ENCODE measurements at regions of chr11 and their contacts with region 1.

Region 1: DNA sequence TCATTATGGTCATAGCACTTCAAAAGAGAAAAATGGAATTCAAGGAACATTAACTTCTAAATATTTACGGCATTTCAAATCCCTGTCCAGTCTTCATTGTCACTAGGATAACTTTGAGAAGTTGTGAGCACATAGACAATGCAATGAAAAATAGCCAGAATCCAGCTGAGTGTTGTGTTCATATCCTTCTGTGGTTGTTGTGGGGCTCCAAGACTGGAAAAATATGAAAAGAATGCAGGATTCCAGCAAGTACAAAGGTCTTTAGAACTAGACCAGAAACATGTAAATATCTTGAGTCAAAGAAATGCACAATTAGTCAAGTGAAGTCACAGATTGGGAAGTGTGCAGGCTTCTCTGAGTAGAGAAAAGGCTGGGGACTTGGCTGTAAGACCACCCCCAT is 68.7 kb downstream of the WT1 start:
- DNase-seq: peak in 1 of 2 experiments; percentile 38
- H3K4me3 ChIP-seq: no peak overlapping the region
- H3K4me3 Mint-ChIP-seq: peak overlapping the region; percentile 40
- H3K27ac Mint-ChIP-seq: peak overlapping the region; percentile 63
- H3K4me1 ChIP-seq: peaks cover 14% of the 10 kb centered on the region
- H3K4me1 Mint-ChIP-seq: peaks cover 14% of the 10 kb centered on the region
- H3K27me3 ChIP-seq: no peaks in the 10 kb centered on the region
- H3K27me3 Mint-ChIP-seq: no peaks in the 10 kb centered on the region
- CTCF ChIP-seq: no peak

Region 2: DNA sequence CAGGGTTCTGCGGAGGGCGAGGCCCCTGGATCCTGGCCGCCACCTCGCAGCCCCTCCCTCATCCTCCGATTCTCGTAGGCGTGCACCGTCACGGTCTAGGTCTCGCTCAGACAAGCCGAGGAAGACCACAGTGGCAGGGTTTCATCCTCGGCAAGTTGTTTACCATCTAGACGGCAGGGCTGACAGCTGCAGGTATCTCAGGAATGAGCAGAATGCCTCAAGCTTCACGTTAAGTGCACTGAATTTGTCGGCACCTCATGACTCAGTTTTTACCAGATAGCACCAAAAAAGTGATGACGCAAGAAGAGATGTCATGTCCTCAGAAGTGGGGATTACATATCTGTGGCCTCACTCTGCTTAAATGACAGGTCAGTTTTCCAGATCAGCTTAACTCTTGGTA is 33.5 kb after region 1 on chr11:
- CTCF ChIA-PET with region 1: no interaction called
- POLR2A ChIA-PET with region 1: no interaction called
- intact Hi-C with region 1: loop called (anchors 2 kb)
- DNase-seq: peak; percentile 72 to 79
- H3K4me3 ChIP-seq: peak overlapping the region; percentile 6; the same call in 1 of the 2 replicates
- H3K4me3 Mint-ChIP-seq: peak overlapping the region; percentile 57
- H3K27ac Mint-ChIP-seq: peak overlapping the region; percentile 63
- H3K4me1 ChIP-seq: peaks cover 25% of the 10 kb centered on the region
- H3K4me1 Mint-ChIP-seq: peaks cover 26% of the 10 kb centered on the region
- H3K27me3 ChIP-seq: no peaks in the 10 kb centered on the region
- H3K27me3 Mint-ChIP-seq: no peaks in the 10 kb centered on the region
- CTCF ChIP-seq: no peak